Mammary epithelial cell (primary cell): ENCODE measurements at regions of chr6 and their contacts with region 1.

Region 1: DNA sequence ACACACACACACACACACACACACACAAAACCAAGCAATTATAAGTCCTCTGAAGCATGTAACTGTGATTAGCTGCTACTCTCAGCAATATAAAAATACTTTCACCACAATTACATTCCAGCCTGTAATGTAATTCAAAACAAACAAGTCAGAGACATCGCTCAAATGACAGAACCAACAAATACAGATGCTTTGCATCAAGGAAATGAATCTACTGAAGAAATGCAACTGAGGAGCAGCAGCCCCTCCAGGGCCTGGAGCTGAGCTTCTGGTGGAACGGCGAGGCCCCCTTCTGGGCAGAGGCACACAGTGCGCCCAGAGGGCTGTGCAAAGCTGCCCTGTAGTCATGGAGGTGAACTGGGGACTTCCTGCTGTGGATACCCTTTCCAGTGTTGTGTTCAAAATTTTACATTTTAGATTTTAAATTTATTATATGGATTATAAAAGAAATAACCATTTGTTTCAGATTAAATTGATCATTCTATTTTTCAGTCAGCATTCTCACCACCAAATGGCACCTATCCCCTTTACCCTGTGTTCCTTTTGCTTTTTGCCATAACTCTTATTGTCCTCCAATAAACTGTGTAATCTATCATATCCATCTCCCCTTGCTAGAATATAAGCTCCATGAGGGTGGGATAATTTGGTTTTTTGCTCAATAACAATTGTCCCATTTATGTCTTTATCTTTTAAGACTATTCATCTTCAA is 23.2 kb downstream of the ADAT2 start:
- DNase-seq: peak; percentile 70
- H3K4me3 ChIP-seq: no peak overlapping the region
- H3K27ac ChIP-seq: no peak overlapping the region
- H3K4me1 ChIP-seq: peaks cover 12% of the 10 kb centered on the region
- H3K27me3 ChIP-seq: no peaks in the 10 kb centered on the region
- CTCF ChIP-seq: peak; percentile 98 to 100

Region 2: GRCh38 chr6:142566628-142567396 is 860.5 kb before region 1 on chr6:
- CTCF ChIA-PET with region 1: no interaction called
- dilution Hi-C with region 1: no loop called
- in situ Hi-C with region 1: no loop called
- intact Hi-C with region 1: loop called (anchors 2 kb)
- DNase-seq: peak; percentile 52
- H3K4me3 ChIP-seq: no peak overlapping the region
- H3K27ac ChIP-seq: no peak overlapping the region
- H3K4me1 ChIP-seq: peaks cover 35% of the 10 kb centered on the region
- H3K27me3 ChIP-seq: no peaks in the 10 kb centered on the region
- CTCF ChIP-seq: peak; percentile 95 to 99

Region 3: GRCh38 chr6:142885182-142885867 is 541.9 kb before region 1 on chr6:
- CTCF ChIA-PET with region 1: no interaction called
- dilution Hi-C with region 1: no loop called
- in situ Hi-C with region 1: no loop called
- intact Hi-C with region 1: loop called (anchors 5 kb)
- DNase-seq: peak; percentile 99
- H3K4me3 ChIP-seq: peak overlapping the region; percentile 7 to 37 (median 29)
- H3K27ac ChIP-seq: peak overlapping the region; percentile 86
- H3K4me1 ChIP-seq: peaks cover 25% of the 10 kb centered on the region
- H3K27me3 ChIP-seq: no peaks in the 10 kb centered on the region
- CTCF ChIP-seq: no peak

Region 4: DNA sequence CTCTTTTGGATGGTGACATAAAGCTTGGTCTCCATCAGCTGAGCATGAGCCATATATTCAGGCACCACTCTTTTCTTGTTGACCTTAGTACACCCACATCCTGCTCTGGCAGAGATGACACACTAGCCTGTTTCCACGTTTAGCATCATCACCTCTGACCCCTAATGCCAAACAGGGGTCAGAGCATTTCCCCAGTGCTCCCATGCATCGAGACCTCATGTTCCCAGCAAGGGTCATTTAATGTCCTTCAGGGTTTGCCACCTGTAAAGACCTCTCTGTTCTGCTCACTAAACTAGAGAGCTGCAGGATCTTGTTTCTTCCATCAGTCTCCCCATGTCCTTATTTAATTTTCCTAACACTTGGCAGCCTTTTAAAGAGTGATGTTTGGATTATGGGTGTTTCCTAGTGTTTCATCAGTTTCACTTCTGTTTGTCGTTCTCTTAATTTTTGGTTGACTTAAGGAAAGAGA is 269.1 kb before region 1 on chr6:
- CTCF ChIA-PET with region 1: interaction called, 25 read pairs
- dilution Hi-C with region 1: no loop called
- in situ Hi-C with region 1: no loop called
- intact Hi-C with region 1: no loop called
- DNase-seq: peak; percentile 41
- H3K4me3 ChIP-seq: no peak overlapping the region
- H3K27ac ChIP-seq: no peak overlapping the region
- H3K4me1 ChIP-seq: peaks cover 28% of the 10 kb centered on the region
- H3K27me3 ChIP-seq: no peaks in the 10 kb centered on the region
- CTCF ChIP-seq: no peak

Region 5: GRCh38 chr6:143397229-143398222 is 29.7 kb before region 1 on chr6:
- CTCF ChIA-PET with region 1: no interaction called
- dilution Hi-C with region 1: no loop called
- in situ Hi-C with region 1: no loop called
- intact Hi-C with region 1: loop called (anchors 2 kb)
- DNase-seq: peak; percentile 100
- H3K4me3 ChIP-seq: no peak overlapping the region
- H3K27ac ChIP-seq: peak overlapping the region; percentile 97
- H3K4me1 ChIP-seq: peaks cover 63% of the 10 kb centered on the region
- H3K27me3 ChIP-seq: no peaks in the 10 kb centered on the region
- CTCF ChIP-seq: no peak